Naive thymus-derived CD4-positive, alpha-beta T cell (primary cell): ENCODE measurements at regions of chr12 and their contacts with region 1.

Region 1: DNA sequence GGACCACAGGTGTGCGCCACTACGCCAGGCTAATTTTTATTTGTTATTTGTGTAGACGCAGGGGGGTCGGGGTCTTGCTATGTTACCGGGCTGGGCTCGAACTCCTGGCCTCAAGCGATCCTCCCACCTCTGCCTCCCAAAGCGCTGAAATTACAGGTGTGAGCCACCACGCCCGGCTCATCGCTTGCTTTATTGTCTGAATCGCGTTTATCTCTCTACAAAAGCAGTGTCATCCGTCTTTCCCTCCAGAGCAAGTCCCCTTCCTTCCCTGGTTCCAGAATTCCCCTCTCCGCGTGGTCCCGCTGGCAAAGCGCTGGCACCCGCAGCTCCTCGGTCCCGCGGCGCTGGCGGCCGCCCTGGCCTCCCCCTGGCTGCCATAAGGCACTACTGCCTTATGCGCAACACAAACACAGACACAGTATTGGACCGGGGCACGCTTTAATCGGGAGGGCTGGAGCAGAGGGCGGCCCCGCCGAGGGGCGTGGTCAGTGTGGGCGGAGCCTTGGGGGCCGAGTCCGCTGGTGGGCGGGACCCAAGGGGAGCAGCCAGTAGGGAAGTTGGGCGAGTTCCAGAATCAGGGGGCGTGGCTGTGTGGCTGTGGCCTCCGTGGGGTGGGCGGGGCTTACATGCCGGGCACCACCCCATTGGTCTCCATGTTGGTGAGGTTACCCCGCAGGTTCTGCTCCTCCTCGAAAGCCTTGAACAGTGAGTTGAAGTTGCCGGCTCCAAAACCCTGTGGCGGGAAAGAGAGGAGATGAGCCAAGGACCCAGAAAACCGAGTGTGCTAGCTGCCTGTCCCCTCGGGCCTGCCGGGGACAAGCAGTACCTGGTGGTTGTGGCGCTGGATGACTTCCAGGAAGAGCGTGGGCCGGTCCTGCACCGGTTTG is 19.3 kb downstream of the HPD start:
- DNase-seq: peak; percentile 98 to 100 (median 99)
- ATAC-seq: peak; percentile 100
- H3K4me3 ChIP-seq: peak overlapping the region; percentile 91
- H3K4me3 Mint-ChIP-seq: peak overlapping the region; percentile 96 to 100 (median 98)
- H3K27ac ChIP-seq: peak overlapping the region; percentile 58
- H3K27ac Mint-ChIP-seq: peak overlapping the region; percentile 87 to 96 (median 92)
- H3K4me1 ChIP-seq: peaks cover 8 to 13% of the 10 kb centered on the region in 2 donors
- H3K4me1 Mint-ChIP-seq: peaks cover 12 to 27% (median 18%) of the 10 kb centered on the region in 7 donors
- H3K27me3 ChIP-seq: no peaks in the 10 kb centered on the region
- H3K27me3 Mint-ChIP-seq: no peaks in the 10 kb centered on the region

Region 2: DNA sequence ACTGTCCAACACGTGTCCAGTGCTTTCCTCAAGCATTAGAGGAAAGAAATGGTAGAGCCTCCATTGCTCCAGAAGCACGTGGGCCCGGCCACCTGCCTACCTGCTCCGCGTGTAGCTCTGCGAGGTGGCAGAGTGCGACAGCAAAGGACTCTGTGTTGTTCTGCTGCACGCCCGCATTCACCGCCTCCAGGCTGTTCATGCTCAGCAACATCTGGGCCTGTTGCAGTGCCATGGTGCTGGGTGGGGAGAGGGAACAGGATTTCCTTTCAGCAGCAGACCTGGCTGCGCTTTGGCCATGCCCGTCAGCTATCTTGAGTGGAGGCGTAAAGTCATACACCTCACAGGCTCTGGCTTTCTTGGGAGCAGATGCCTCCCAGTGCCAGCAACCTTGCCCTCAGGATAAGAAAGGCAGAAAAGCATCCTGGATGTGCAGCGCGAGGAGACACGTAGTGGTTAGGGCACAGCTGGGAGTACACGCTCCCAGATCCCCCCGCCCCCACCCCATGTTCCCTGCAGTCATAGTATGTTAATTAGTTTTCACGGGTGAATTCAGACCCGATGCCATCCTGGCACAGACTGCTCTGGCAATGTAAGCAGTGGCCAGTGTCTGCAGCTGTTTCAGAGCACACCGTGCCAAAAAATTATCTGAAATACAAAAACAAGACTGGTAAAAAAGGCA is 512.2 kb before region 1 on chr12:
- CTCF ChIA-PET with region 1: no interaction called
- POLR2A ChIA-PET with region 1: no interaction called
- intact Hi-C with region 1: no loop called
- DNase-seq: no peak
- ATAC-seq: no peak
- H3K4me3 ChIP-seq: no peak overlapping the region
- H3K4me3 Mint-ChIP-seq: no peak overlapping the region
- H3K27ac ChIP-seq: no peak overlapping the region
- H3K27ac Mint-ChIP-seq: no peak overlapping the region
- H3K4me1 ChIP-seq: no peaks in the 10 kb centered on the region
- H3K4me1 Mint-ChIP-seq: peaks cover 0 to 4% (median 0%) of the 10 kb centered on the region in 7 donors
- H3K27me3 ChIP-seq: no peaks in the 10 kb centered on the region
- H3K27me3 Mint-ChIP-seq: no peaks in the 10 kb centered on the region

Region 3: GRCh38 chr12:121467115-121467793 is 372.1 kb before region 1 on chr12:
- CTCF ChIA-PET with region 1: no interaction called
- POLR2A ChIA-PET with region 1: no interaction called
- intact Hi-C with region 1: loop called (anchors 1 kb)
- DNase-seq: peak; percentile 79 to 93 (median 86)
- ATAC-seq: peak; percentile 92
- H3K4me3 ChIP-seq: peak overlapping the region; percentile 44
- H3K4me3 Mint-ChIP-seq: peak overlapping the region in 6 of 10 donors; percentile 45 to 90 (median 59)
- H3K27ac ChIP-seq: peak overlapping the region; percentile 73
- H3K27ac Mint-ChIP-seq: no peak overlapping the region
- H3K4me1 ChIP-seq: peaks cover 7 to 17% of the 10 kb centered on the region in 2 donors
- H3K4me1 Mint-ChIP-seq: peaks cover 18 to 34% (median 30%) of the 10 kb centered on the region in 7 donors
- H3K27me3 ChIP-seq: no peaks in the 10 kb centered on the region
- H3K27me3 Mint-ChIP-seq: peaks cover 0 to 3% (median 0%) of the 10 kb centered on the region in 5 donors

Region 4: DNA sequence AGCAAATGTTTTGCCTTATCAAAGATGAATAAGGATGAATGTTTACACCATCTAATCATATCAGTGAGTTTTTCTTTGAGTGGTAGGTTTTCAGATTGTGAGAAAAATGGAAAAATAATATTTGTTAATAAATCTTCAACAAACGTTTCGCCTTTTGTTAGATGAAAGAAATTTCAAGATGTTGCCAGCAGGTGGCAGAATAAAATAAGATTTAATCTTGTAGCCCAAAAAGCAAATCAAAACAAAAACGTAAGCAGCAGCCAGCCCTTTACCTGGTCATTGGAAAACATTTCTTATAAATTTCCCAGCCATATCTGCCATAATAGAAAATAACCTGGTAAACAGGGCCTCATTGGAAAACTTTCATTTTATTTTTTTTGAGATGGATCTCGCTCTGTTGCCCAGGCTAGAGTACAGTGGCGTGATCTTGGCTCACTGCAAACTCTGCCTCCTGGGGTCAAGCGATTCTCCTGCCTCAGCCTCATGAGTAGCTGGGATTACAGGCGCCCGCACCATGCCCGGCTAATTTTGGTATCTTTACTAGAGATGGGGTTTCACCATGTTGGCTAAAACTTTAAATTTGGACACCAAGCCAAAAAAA is 142.2 kb before region 1 on chr12:
- CTCF ChIA-PET with region 1: no interaction called
- POLR2A ChIA-PET with region 1: interaction called, 3 read pairs
- intact Hi-C with region 1: loop called in 1 of 2 experiments (anchors 1 kb)
- DNase-seq: peak in 7 of 9 donors; percentile 37 to 72 (median 63)
- ATAC-seq: no peak
- H3K4me3 ChIP-seq: no peak overlapping the region
- H3K4me3 Mint-ChIP-seq: no peak overlapping the region
- H3K27ac ChIP-seq: no peak overlapping the region
- H3K27ac Mint-ChIP-seq: peak overlapping the region in 4 of 9 donors; percentile 5 to 41 (median 28)
- H3K4me1 ChIP-seq: no peaks in the 10 kb centered on the region
- H3K4me1 Mint-ChIP-seq: peaks cover 0 to 5% (median 0%) of the 10 kb centered on the region in 7 donors
- H3K27me3 ChIP-seq: no peaks in the 10 kb centered on the region
- H3K27me3 Mint-ChIP-seq: peaks cover 0 to 7% (median 0%) of the 10 kb centered on the region in 5 donors

Region 5: GRCh38 chr12:121802846-121803630 is 36.3 kb before region 1 on chr12:
- CTCF ChIA-PET with region 1: no interaction called
- POLR2A ChIA-PET with region 1: interaction called, 17 read pairs
- intact Hi-C with region 1: loop called in 1 of 2 experiments (anchors 2 kb)
- DNase-seq: peak; percentile 84 to 94 (median 92)
- ATAC-seq: peak; percentile 65
- H3K4me3 ChIP-seq: peak overlapping the region; percentile 94
- H3K4me3 Mint-ChIP-seq: peak overlapping the region; percentile 89 to 99 (median 96)
- H3K27ac ChIP-seq: peak overlapping the region; percentile 96
- H3K27ac Mint-ChIP-seq: peak overlapping the region; percentile 98 to 100 (median 99)
- H3K4me1 ChIP-seq: peaks cover 21 to 28% of the 10 kb centered on the region in 2 donors
- H3K4me1 Mint-ChIP-seq: peaks cover 25 to 37% (median 29%) of the 10 kb centered on the region in 7 donors
- H3K27me3 ChIP-seq: no peaks in the 10 kb centered on the region
- H3K27me3 Mint-ChIP-seq: no peaks in the 10 kb centered on the region

Region 6: GRCh38 chr12:121823101-121823726 is 16.1 kb before region 1 on chr12:
- CTCF ChIA-PET with region 1: no interaction called
- POLR2A ChIA-PET with region 1: interaction called, 14 read pairs
- intact Hi-C with region 1: loop called in 1 of 2 experiments (anchors 2 kb)
- DNase-seq: peak in 1 of 9 donors; percentile 10
- ATAC-seq: no peak
- H3K4me3 ChIP-seq: no peak overlapping the region
- H3K4me3 Mint-ChIP-seq: peak overlapping the region in 1 of 10 donors; percentile 23
- H3K27ac ChIP-seq: no peak overlapping the region
- H3K27ac Mint-ChIP-seq: peak overlapping the region in 1 of 9 donors; percentile 58
- H3K4me1 ChIP-seq: no peaks in the 10 kb centered on the region
- H3K4me1 Mint-ChIP-seq: peaks cover 0 to 9% (median 1%) of the 10 kb centered on the region in 7 donors
- H3K27me3 ChIP-seq: no peaks in the 10 kb centered on the region
- H3K27me3 Mint-ChIP-seq: no peaks in the 10 kb centered on the region

Region 7: DNA sequence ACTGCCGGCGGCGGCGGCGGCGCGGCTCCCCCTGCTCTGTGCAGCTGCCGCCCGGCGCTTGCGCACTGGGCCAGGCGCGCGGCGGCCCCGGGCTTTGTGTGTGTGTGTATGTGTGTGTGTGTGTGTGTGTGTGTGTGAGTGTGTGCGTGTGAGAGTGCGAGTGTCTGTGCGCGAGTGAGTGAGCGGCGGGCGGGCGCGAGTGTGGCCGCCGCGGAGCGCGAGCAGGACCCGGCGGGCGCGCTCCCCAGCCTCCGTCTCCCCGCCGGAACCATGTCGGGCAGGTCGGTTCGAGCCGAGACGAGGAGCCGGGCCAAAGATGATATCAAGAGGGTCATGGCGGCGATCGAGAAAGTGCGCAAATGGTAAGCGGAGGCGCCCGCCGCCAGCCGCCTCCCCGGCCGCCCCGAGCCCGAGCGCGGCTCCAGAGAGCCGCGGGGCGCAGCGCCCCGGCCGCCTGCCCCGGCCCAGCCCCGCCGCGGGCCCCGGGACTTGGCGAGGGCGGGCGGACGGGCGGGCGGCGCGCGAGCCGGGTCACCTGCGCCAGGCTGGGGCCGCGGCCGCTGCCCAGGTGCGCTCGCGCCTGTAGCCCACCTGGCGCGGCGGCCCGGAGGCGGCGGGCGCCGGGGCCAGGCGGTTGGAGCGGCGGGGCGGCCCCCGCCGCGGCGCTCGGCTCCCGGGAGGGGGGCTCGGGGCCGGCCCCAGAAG is 182.6 kb after region 1 on chr12 and contains the start of gene BCL7A:
- CTCF ChIA-PET with region 1: no interaction called
- POLR2A ChIA-PET with region 1: no interaction called
- intact Hi-C with region 1: loop called in 1 of 2 experiments (anchors 2 kb)
- DNase-seq: peak; percentile 28 to 70 (median 64)
- ATAC-seq: peak; percentile 86
- H3K4me3 ChIP-seq: peak within 1 kb of the TSS; percentile 57
- H3K4me3 Mint-ChIP-seq: peak within 1 kb of the TSS; percentile 86 to 96 (median 92)
- H3K27ac ChIP-seq: peak within 1 kb of the TSS; percentile 43
- H3K27ac Mint-ChIP-seq: peak within 1 kb of the TSS in 8 of 9 donors; percentile 76 to 96 (median 84)
- H3K4me1 ChIP-seq: peaks cover 0 to 18% of the 10 kb centered on the region in 2 donors
- H3K4me1 Mint-ChIP-seq: peaks cover 0 to 13% (median 10%) of the 10 kb centered on the region in 7 donors
- H3K27me3 ChIP-seq: no peaks in the 10 kb centered on the region
- H3K27me3 Mint-ChIP-seq: peaks cover 5 to 31% (median 6%) of the 10 kb centered on the region in 5 donors
- total RNA-seq, gene BCL7A: 4.1 to 6.6 (median 5.4) TPM

Region 8: GRCh38 chr12:122123051-122123760 is 283.9 kb after region 1 on chr12:
- CTCF ChIA-PET with region 1: no interaction called
- POLR2A ChIA-PET with region 1: no interaction called
- intact Hi-C with region 1: no loop called
- DNase-seq: peak; percentile 52 to 82 (median 68)
- ATAC-seq: peak; percentile 73
- H3K4me3 ChIP-seq: no peak overlapping the region
- H3K4me3 Mint-ChIP-seq: peak overlapping the region; percentile 26 to 80 (median 59)
- H3K27ac ChIP-seq: peak overlapping the region; percentile 23
- H3K27ac Mint-ChIP-seq: peak overlapping the region; percentile 25 to 94 (median 80)
- H3K4me1 ChIP-seq: peaks cover 7 to 8% of the 10 kb centered on the region in 2 donors
- H3K4me1 Mint-ChIP-seq: peaks cover 30 to 51% (median 45%) of the 10 kb centered on the region in 7 donors
- H3K27me3 ChIP-seq: no peaks in the 10 kb centered on the region
- H3K27me3 Mint-ChIP-seq: no peaks in the 10 kb centered on the region